PC-9 (cell line): ENCODE measurements at regions of chr4 and their contacts with region 1.

Region 1: DNA sequence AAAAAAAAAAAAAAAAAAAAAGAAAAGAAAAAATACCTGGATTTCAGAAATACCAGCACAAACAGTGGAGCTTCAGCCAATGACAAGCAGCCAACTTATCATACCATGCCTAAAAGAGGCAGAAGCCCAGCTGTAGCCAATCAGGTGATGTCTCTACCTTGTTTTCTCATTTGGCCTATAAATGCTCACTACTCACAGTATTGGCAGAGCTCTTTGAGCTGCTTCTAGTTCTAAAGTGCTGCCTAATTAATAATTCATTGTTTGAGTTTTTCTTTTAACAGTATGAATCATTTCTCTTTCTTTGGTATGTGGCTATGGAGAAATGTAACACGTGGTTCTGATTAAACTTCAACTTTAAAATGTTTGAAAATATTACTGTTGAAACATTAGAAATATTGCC is 188.8 kb upstream of the TECRL start:
- DNase-seq: no peak
- H3K4me3 ChIP-seq: no peak overlapping the region
- H3K27ac ChIP-seq: no peak overlapping the region
- H3K4me1 ChIP-seq: no peaks in the 10 kb centered on the region
- H3K27me3 ChIP-seq: no peaks in the 10 kb centered on the region
- CTCF ChIP-seq: no peak

Region 2: GRCh38 chr4:64584125-64584524 is 13.9 kb before region 1 on chr4:
- CTCF ChIA-PET with region 1: interaction called, 11 read pairs
- POLR2A ChIA-PET with region 1: no interaction called
- intact Hi-C with region 1: no loop called
- DNase-seq: no peak
- H3K4me3 ChIP-seq: no peak overlapping the region
- H3K27ac ChIP-seq: no peak overlapping the region
- H3K4me1 ChIP-seq: no peaks in the 10 kb centered on the region
- H3K27me3 ChIP-seq: no peaks in the 10 kb centered on the region
- CTCF ChIP-seq: no peak

Region 3: GRCh38 chr4:64623346-64623745 is 25.3 kb after region 1 on chr4:
- CTCF ChIA-PET with region 1: no interaction called
- POLR2A ChIA-PET with region 1: no interaction called
- intact Hi-C with region 1: no loop called
- DNase-seq: no peak
- H3K4me3 ChIP-seq: no peak overlapping the region
- H3K27ac ChIP-seq: no peak overlapping the region
- H3K4me1 ChIP-seq: no peaks in the 10 kb centered on the region
- H3K27me3 ChIP-seq: no peaks in the 10 kb centered on the region
- CTCF ChIP-seq: no peak